H1 (cell line): ENCODE measurements at regions of chr1 and their contacts with region 1.

Region 1: GRCh38 chr1:32817159-32817814 is at the starts of genes S100PBP and YARS1:
- DNase-seq: peak; percentile 97 to 100
- H3K4me3 ChIP-seq: peak within 1 kb of the TSS; percentile 81 to 99 (median 93)
- H3K27ac ChIP-seq: peak within 1 kb of the TSS; percentile 95
- H3K4me1 ChIP-seq: peaks cover 0 to 7% (median 4%) of the 10 kb centered on the region in 4 experiments; a peak in 3 of 7 replicates
- H3K27me3 ChIP-seq: no peaks in the 10 kb centered on the region
- CTCF ChIP-seq: no peak
- EP300 ChIP-seq: peak in 1 of 2 experiments; percentile 96; a peak in 2 of 3 replicates
- POLR2A ChIP-seq: peak in 1 of 2 experiments; percentile 65; a peak in 2 of 3 replicates
- RAD21 ChIP-seq: no peak
- total RNA-seq, gene S100PBP: 65.7 and 68.3 TPM in 2 replicates
- total RNA-seq, gene YARS1: 226 and 230 TPM in 2 replicates

Region 2: DNA sequence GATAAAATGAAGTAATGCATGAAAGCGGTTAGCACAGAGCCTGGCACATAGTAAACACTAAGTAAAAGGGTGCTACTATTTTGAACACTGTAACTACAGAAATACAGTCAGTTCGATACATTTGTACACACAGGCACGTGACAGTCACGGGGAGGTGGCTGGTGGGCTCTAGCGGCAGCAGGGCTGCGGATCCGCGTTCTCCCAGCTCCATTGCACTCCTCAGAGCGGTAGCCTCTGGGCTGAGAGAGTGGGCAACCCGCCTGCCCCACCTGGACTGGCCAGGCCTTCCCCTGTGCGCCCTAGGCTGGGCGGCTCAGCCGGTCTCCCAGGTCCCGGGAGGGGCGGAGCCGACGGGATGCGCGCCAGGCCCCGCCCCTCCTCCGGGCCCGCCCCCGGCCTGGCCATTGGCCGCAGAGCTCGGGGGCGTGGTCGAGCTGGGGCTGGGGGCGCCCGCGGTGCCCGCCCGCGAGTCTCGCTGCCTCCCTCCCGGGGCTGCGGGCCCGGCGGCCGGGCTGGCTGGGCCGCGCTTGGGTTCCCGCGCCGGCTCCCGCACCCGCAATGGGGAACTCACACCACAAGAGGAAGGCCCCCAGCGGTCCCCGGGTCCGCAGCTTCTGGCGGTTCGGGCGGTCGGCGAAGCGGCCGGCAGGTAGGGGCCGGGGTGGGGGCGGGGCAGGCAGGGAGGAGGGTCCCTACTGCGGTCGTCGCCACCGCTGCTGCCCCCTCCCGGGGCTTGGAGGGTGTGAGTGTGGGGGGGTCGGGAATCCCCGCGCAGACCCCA is 63.6 kb before region 1 on chr1:
- CTCF ChIA-PET with region 1: interaction called, 3 read pairs
- POLR2A ChIA-PET with region 1: interaction called, 12 read pairs
- DNase-seq: peak; percentile 59 to 91
- H3K4me3 ChIP-seq: peak overlapping the region; percentile 79 to 100 (median 94)
- H3K27ac ChIP-seq: peak overlapping the region; percentile 92
- H3K4me1 ChIP-seq: peaks cover 16 to 37% (median 22%) of the 10 kb centered on the region in 4 experiments
- H3K27me3 ChIP-seq: no peaks in the 10 kb centered on the region
- CTCF ChIP-seq: peak in 1 of 3 experiments; percentile 26; a peak in 1 of 4 replicates
- EP300 ChIP-seq: no peak
- POLR2A ChIP-seq: peak in 1 of 2 experiments; percentile 70; a peak in 2 of 3 replicates
- RAD21 ChIP-seq: peak; percentile 3 to 15; a peak in 2 of 4 replicates

Region 3: DNA sequence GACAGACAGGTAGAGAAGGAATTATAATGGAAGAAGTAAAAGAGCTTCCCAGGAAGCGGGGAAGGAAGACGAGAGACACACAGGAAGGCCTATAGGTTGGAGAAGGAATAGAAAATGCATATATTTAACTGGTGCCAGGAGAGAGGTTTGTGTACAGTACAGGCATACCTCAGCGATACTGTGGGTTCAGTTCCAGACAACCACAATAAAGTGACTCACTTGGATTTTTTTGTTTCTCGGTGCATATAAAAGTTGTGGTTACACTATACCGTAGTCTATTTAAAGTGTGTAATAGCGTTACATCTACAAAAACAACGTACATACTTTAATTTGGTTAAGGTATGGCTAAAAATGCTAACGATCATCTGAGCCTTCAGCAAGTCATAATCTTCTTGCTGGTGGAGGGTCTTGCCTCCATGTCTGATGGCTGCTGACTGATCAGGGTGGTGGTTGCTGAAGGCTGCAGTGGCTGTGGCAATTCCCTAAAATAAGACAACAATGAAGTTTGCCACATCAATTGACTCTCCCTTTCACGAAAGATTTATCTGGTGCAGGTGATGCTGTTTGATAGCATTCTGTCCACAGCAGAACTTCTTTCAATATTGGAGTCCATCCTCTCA is 16.1 kb before region 1 on chr1:
- CTCF ChIA-PET with region 1: no interaction called
- POLR2A ChIA-PET with region 1: interaction called, 23 read pairs
- DNase-seq: no peak
- H3K4me3 ChIP-seq: no peak overlapping the region
- H3K27ac ChIP-seq: no peak overlapping the region
- H3K4me1 ChIP-seq: no peaks in the 10 kb centered on the region
- H3K27me3 ChIP-seq: no peaks in the 10 kb centered on the region
- CTCF ChIP-seq: no peak
- EP300 ChIP-seq: no peak
- POLR2A ChIP-seq: no peak
- RAD21 ChIP-seq: no peak

Region 4: GRCh38 chr1:32806910-32807523 is 10.3 kb before region 1 on chr1:
- CTCF ChIA-PET with region 1: no interaction called
- POLR2A ChIA-PET with region 1: interaction called, 23 read pairs
- DNase-seq: no peak
- H3K4me3 ChIP-seq: no peak overlapping the region
- H3K27ac ChIP-seq: no peak overlapping the region
- H3K4me1 ChIP-seq: peaks cover 3 to 6% (median 4%) of the 10 kb centered on the region in 4 experiments; a peak in 6 of 7 replicates
- H3K27me3 ChIP-seq: no peaks in the 10 kb centered on the region
- CTCF ChIP-seq: no peak
- EP300 ChIP-seq: no peak
- POLR2A ChIP-seq: no peak; a peak in 1 of 3 replicates
- RAD21 ChIP-seq: no peak

Region 5: GRCh38 chr1:32828341-32828740 is 11.1 kb after region 1 on chr1:
- CTCF ChIA-PET with region 1: interaction called, 3 read pairs
- POLR2A ChIA-PET with region 1: interaction called, 14 read pairs
- DNase-seq: no peak
- H3K4me3 ChIP-seq: no peak overlapping the region
- H3K27ac ChIP-seq: no peak overlapping the region
- H3K4me1 ChIP-seq: no peaks in the 10 kb centered on the region
- H3K27me3 ChIP-seq: no peaks in the 10 kb centered on the region
- CTCF ChIP-seq: peak in 1 of 3 experiments; percentile 30; a peak in 1 of 4 replicates
- EP300 ChIP-seq: no peak
- POLR2A ChIP-seq: no peak
- RAD21 ChIP-seq: no peak

Region 6: DNA sequence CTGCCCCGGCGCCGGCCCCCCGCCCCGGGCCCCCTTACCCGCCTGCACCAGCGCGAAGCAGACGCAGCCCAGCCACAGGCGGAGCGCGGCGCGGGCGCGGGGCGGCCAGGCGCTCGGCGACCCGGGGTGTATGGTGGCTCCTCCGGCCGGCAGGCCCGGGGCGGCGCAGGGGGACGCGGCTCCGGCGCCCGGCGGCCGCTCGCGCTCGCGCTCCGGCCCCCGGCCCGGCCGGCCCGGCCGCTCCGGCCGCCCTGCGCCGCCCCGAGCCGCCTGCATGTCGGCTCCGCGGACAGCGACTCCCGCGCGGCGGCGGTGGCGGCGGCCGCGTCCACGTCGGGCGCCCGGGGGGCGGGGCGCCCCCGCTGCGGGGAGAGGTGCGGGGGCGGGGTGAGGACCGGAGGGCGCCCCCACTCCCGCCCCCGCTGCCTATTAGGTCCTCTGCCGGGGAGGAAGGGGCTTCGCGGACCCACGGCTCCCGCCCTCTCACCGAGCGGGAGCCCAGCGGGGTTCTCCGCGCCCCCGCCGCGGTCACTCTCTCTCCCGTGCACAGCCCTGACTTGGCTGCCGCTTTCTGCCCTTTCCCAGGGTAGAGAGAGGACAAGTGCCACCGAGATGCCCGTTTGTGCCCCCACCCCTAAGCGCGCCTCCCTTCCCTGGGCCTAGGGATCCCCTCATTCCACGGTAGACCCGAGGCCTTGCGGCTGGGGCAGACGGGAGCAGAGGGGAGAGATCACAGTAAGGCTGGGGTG is 53.5 kb after region 1 on chr1 and contains the start of gene FNDC5:
- CTCF ChIA-PET with region 1: interaction called, 4 read pairs
- POLR2A ChIA-PET with region 1: interaction called, 19 read pairs
- DNase-seq: no peak
- H3K4me3 ChIP-seq: peak within 1 kb of the TSS; percentile 28 to 65 (median 37)
- H3K27ac ChIP-seq: no peak within 1 kb of the TSS
- H3K4me1 ChIP-seq: peaks cover 6 to 27% (median 21%) of the 10 kb centered on the region in 4 experiments
- H3K27me3 ChIP-seq: peaks cover 6 to 35% (median 28%) of the 10 kb centered on the region in 4 experiments
- CTCF ChIP-seq: no peak
- EP300 ChIP-seq: no peak
- POLR2A ChIP-seq: no peak
- RAD21 ChIP-seq: no peak
- total RNA-seq, gene FNDC5: 0.94 and 2.0 TPM in 2 replicates

Region 7: GRCh38 chr1:32876341-32877210 is 59.3 kb after region 1 on chr1:
- CTCF ChIA-PET with region 1: interaction called, 4 read pairs
- POLR2A ChIA-PET with region 1: interaction called, 19 read pairs
- DNase-seq: peak in 1 of 2 experiments; percentile 89
- H3K4me3 ChIP-seq: peak overlapping the region in 1 of 4 experiments; percentile 25; a peak in 1 of 8 replicates
- H3K27ac ChIP-seq: no peak overlapping the region
- H3K4me1 ChIP-seq: peaks cover 6 to 30% (median 15%) of the 10 kb centered on the region in 4 experiments
- H3K27me3 ChIP-seq: peaks cover 0 to 7% (median 7%) of the 10 kb centered on the region in 4 experiments; a peak in 6 of 7 replicates
- CTCF ChIP-seq: peak; percentile 93 to 99 (median 99)
- EP300 ChIP-seq: no peak
- POLR2A ChIP-seq: no peak
- RAD21 ChIP-seq: peak; percentile 62 to 75